AG04450 (cell line): ENCODE measurements at regions of chr16 and their contacts with region 1.

Region 1: DNA sequence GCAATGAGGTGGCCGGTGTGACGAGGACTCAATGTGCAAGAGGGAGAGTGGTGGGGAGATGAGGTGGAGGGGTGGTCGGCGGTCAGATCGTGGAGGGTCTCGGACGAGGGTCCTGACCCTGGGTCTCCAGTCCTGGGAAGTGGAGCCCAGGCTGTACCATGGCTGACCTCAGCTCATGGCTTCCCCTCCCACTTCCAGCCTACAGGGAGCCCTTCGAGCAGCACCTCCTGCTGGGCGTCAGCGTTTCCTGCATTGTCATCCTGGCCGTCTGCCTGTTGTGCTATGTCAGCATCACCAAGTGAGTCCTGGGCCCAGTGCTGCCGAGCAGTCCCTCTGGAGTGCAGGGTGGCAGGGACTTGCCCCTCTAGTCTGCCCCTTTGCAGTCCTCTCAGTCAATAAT is 41.8 kb downstream of the IL4R start:
- DNase-seq: no peak
- H3K4me3 ChIP-seq: no peak overlapping the region
- H3K27ac ChIP-seq: no peak overlapping the region
- H3K27me3 ChIP-seq: no peaks in the 10 kb centered on the region
- CTCF ChIP-seq: peak; percentile 25; the same call in 1 of the 2 replicates

Region 2: DNA sequence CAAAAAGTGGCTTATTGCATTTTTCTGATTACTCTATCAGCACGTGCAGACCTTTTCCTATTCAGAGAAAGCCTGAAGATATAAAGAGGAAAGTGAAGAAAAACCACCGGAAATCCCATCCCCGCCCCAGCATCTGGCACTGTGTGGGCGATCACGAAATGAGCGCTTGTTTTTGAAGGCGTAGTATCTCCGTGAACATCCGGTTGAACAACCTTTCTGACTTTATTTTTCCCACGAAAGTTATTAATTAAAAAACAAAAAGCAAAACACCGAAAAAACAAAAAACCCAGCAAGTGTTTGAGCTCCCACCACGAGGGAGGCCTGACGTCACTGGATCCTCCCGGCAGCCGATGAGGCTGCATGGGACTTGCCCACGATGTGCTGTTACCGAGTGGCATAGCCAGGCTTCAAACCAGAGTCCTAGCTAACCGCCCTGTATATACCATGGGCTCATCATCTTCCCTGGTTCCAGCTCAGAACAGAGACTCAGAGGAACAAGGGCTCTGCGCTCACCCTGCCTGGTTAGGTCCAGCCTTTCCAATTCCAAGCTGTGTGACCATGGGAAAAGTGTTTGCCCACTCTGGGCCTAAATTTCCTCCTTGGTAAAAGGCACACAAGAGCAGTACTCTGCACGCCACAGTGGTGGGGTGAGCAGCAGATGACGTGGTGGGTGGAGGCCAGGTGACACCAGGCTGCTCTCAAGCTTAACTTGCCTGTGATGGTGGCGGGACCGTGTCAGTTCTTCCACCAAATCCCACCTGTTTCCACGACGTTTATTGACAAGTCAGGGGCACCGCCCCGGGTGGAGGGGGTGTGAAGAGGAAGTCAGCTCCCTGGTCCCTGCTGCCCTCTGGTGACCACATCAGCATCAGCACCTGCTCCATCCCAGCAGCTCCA is 12.1 kb after region 1 on chr16:
- CTCF ChIA-PET with region 1: interaction called, 14 read pairs
- POLR2A ChIA-PET with region 1: no interaction called
- DNase-seq: peak; percentile 20
- H3K4me3 ChIP-seq: no peak overlapping the region
- H3K27ac ChIP-seq: peak overlapping the region; percentile 11
- H3K27me3 ChIP-seq: peaks cover 3% of the 10 kb centered on the region
- CTCF ChIP-seq: peak; percentile 81